ENCODE measurements at regions of chr3 and their contacts with region 1.

Region 1: DNA sequence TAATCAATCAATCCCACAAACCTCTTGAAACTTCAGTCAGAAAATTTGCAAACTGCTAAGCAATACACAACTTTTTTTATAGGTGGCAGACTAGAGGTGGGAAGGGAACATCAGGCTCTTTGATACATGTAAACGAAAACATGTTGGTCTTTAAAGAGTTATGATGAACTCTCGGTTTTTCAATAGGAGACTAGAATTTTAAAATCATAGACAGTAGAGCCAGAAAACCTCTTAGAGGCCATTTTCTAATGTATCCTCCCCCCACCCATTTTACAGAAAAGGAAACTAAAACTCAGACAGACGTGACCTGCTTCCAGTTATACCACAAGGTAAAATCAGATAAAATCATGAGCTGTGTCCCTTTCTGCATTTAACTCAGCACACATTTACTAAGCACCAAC is 179.1 kb upstream of the LPP start:
- DNase-seq: no peak
- ATAC-seq: peak; percentile 61
- H3K4me3 Mint-ChIP-seq: peak overlapping the region; percentile 57
- H3K27ac Mint-ChIP-seq: peak overlapping the region; percentile 90
- H3K4me1 Mint-ChIP-seq: peaks cover 57% of the 10 kb centered on the region
- H3K27me3 Mint-ChIP-seq: no peaks in the 10 kb centered on the region

Region 2: GRCh38 chr3:187361835-187362234 is 613.0 kb before region 1 on chr3:
- CTCF ChIA-PET with region 1: no interaction called
- POLR2A ChIA-PET with region 1: no interaction called
- intact Hi-C with region 1: no loop called
- DNase-seq: no peak
- ATAC-seq: peak; percentile 88
- H3K4me3 Mint-ChIP-seq: no peak overlapping the region
- H3K27ac Mint-ChIP-seq: no peak overlapping the region
- H3K4me1 Mint-ChIP-seq: peaks cover 7% of the 10 kb centered on the region
- H3K27me3 Mint-ChIP-seq: no peaks in the 10 kb centered on the region

Region 3: DNA sequence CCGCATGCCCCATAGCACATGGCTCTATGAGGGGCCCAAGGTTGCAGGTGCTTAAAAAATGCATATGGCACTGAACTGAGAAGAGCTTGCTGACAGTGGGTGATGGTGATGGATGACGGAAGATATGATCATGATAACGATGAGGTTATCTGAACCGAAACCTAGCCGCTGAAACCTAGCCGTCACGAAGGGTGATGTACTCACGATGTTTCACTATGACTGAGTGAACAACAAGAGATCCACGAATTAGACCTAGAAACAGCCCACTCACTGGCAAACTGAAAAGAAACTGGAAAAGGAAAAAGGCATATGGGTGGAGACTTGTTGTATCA is 172.0 kb before region 1 on chr3:
- CTCF ChIA-PET with region 1: no interaction called
- POLR2A ChIA-PET with region 1: no interaction called
- intact Hi-C with region 1: loop called (anchors 1 to 5 kb)
- DNase-seq: peak; percentile 86
- ATAC-seq: peak; percentile 60
- H3K4me3 Mint-ChIP-seq: peak overlapping the region; percentile 34
- H3K27ac Mint-ChIP-seq: peak overlapping the region; percentile 81
- H3K4me1 Mint-ChIP-seq: peaks cover 93% of the 10 kb centered on the region
- H3K27me3 Mint-ChIP-seq: no peaks in the 10 kb centered on the region

Region 4: DNA sequence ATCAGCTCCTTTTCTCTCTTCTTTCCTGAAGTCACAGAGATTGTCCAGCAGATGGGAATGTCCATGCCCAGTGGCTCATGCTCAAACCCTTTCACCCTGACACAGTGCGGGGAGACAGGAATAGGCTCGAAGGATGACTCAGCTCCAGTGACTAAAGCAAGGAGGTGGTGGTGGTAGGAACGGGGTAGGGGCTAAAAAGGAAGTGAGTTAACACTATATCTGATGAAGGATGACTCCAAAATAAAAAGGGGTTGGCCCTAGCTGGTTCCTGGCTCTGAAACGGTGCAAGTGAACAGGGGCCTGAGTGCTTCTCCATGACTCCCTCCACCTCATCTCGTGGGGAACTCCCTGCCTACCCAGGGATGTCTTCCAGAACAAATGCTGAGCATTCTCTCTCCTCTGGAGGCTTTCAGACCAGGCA is 11.7 kb after region 1 on chr3:
- CTCF ChIA-PET with region 1: interaction called, 8 read pairs
- POLR2A ChIA-PET with region 1: interaction called, 4 read pairs
- intact Hi-C with region 1: loop called (anchors 1 kb)
- DNase-seq: peak; percentile 67
- ATAC-seq: peak; percentile 91
- H3K4me3 Mint-ChIP-seq: no peak overlapping the region
- H3K27ac Mint-ChIP-seq: peak overlapping the region; percentile 49
- H3K4me1 Mint-ChIP-seq: peaks cover 36% of the 10 kb centered on the region
- H3K27me3 Mint-ChIP-seq: no peaks in the 10 kb centered on the region

Region 5: DNA sequence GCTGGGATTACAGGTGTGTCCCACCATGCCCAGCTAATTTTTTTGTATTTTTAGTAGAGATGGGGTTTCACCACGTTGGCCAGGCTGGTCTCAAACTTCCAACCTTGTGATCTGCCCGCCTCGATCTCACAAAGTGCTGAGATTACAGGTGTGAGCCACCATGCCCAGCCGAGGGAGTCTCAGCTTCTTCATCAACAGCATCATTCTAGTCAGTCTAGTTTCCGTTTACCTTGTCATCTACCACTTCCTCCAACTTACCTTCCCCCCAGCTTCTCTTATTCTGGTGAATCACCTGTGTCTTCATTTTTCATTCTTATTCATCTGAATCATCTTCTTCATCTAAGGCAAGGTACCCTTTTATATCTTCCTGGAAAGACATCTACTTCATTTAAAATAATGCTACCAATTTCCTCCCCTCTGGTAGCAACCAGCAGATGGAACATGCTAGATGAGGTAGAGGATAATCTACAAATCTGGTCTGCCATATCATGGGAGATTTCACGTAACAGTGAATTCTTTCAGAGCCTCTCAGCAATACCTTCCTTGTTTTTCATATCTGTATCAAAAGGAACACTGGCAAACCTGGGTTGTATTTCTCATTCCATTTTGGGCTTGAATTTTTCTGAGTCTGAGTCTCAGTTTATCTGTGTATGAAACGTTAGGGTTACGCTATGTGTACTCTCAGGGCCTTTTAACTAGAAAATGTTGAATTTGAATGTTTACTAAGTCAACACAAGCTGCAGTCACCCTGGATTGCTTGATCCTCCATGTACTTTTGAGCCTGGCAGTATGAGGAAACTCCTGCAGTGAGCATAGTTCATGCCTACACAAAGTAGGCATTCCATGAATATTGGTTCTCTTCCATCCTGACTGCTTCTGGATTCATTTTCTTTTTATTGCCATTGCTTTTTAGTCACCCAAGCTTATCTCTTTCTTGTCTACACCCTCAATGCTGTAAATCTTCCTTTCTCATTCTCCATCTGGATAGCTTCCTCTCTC is 195.9 kb after region 1 on chr3:
- CTCF ChIA-PET with region 1: no interaction called
- POLR2A ChIA-PET with region 1: no interaction called
- intact Hi-C with region 1: loop called (anchors 1 to 5 kb)
- DNase-seq: peak; percentile 82
- ATAC-seq: peak; percentile 91
- H3K4me3 Mint-ChIP-seq: peak overlapping the region; percentile 20
- H3K27ac Mint-ChIP-seq: peak overlapping the region; percentile 88
- H3K4me1 Mint-ChIP-seq: peaks cover 59% of the 10 kb centered on the region
- H3K27me3 Mint-ChIP-seq: no peaks in the 10 kb centered on the region

Region 6: DNA sequence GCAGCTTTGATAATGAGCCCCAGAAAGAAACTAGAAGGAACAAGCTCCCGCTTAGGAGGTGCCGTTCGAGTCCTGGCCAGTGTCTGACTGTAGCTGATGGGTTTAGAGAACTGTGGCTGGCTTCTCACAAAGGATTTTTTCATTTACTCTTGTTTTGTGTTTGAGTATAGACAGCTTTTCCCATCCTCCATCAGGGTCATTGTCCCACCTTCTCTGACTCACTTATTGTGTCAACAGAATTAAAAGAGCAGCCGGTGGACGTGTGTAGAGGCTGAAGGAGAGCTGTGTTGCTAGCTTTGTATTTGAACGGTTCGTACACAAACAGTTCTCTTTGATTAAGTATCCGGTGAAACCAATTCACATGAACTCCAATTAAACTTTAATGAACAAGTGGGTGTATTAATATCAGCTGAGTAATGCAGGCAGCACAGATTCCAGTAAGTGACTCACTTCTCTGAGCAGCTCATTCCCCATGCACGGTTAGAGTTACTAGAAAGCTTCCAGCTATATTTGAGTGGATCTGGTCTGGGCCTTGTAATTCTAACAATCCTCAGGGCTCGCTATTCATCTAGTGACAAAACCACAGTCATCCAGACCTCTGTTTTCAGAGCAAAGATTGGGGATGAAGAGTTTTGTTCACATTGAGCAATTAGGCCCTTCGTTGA is 320.1 kb after region 1 on chr3:
- CTCF ChIA-PET with region 1: no interaction called
- POLR2A ChIA-PET with region 1: no interaction called
- intact Hi-C with region 1: loop called (anchors 1 to 5 kb)
- DNase-seq: peak; percentile 29
- ATAC-seq: peak; percentile 37
- H3K4me3 Mint-ChIP-seq: no peak overlapping the region
- H3K27ac Mint-ChIP-seq: peak overlapping the region; percentile 69
- H3K4me1 Mint-ChIP-seq: peaks cover 74% of the 10 kb centered on the region
- H3K27me3 Mint-ChIP-seq: no peaks in the 10 kb centered on the region

Measured in activated CD4-positive, alpha-beta T cell treated with anti-CD3 and anti-CD28 coated beads for 36 hours (primary cell).